ENCODE measurements at regions of chr3 and their contacts with region 1.

Region 1: GRCh38 chr3:17233398-17233800 is 348.6 kb downstream of the PLCL2 start:
- DNase-seq: peak; percentile 5
- H3K4me3 ChIP-seq: no peak overlapping the region
- H3K27ac ChIP-seq: no peak overlapping the region
- H3K4me1 ChIP-seq: no peaks in the 10 kb centered on the region
- H3K27me3 ChIP-seq: no peaks in the 10 kb centered on the region
- CTCF ChIP-seq: peak in 3 of 4 experiments; percentile 35 to 61 (median 51)
- POLR2A ChIP-seq: no peak

Region 2: GRCh38 chr3:16600780-16601539 is 632.4 kb before region 1 on chr3:
- intact Hi-C with region 1: loop called (anchors 5 kb)
- DNase-seq: peak; percentile 79
- H3K4me3 ChIP-seq: no peak overlapping the region
- H3K27ac ChIP-seq: no peak overlapping the region
- H3K4me1 ChIP-seq: no peaks in the 10 kb centered on the region
- H3K27me3 ChIP-seq: no peaks in the 10 kb centered on the region
- CTCF ChIP-seq: peak; percentile 72 to 90 (median 82)
- POLR2A ChIP-seq: no peak

Region 3: DNA sequence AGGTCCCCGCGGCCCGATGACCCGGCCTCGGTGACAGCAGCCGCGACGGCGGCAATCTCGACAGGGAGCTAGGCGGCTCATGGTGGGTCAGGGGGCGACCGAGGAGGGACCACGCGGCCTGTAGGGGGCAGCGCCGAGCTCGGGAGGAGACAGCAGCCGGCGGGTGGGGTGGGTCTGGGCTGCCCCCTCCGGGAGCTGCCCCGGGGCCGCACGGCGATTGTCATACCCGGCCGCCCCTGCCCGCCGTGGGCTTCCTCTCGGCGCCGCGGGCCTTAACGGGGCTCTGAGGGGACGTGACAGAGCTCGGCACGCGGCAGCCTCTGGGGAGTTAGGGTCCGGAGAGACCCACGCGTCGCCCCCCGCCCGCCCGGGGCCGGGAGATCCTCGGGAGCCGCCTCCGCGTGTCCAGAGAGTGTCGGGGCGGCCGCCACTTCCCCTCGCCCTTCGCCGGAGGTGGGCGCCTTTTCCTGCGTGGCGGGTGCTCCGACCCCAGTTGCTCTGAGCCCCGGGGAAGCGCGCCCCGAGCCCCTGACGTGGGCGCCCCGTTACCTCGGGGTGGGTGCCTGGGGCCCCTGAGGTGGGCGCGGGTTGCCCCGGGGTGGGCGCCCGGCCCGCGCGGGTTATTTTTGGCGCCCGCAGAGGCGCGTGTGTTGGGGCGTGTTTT is 349.2 kb before region 1 on chr3:
- intact Hi-C with region 1: loop called (anchors 10 kb)
- DNase-seq: no peak
- H3K4me3 ChIP-seq: peak overlapping the region; percentile 58 to 61
- H3K27ac ChIP-seq: peak overlapping the region; percentile 77 to 84
- H3K4me1 ChIP-seq: no peaks in the 10 kb centered on the region
- H3K27me3 ChIP-seq: no peaks in the 10 kb centered on the region
- CTCF ChIP-seq: peak in 3 of 4 experiments; percentile 29 to 53 (median 36)
- POLR2A ChIP-seq: no peak

Region 4: GRCh38 chr3:17032407-17033034 is 200.9 kb before region 1 on chr3:
- intact Hi-C with region 1: loop called (anchors 10 kb)
- DNase-seq: no peak
- H3K4me3 ChIP-seq: no peak overlapping the region
- H3K27ac ChIP-seq: no peak overlapping the region
- H3K4me1 ChIP-seq: no peaks in the 10 kb centered on the region
- H3K27me3 ChIP-seq: no peaks in the 10 kb centered on the region
- CTCF ChIP-seq: peak in 3 of 4 experiments; percentile 31 to 61 (median 54)
- POLR2A ChIP-seq: no peak

Region 5: DNA sequence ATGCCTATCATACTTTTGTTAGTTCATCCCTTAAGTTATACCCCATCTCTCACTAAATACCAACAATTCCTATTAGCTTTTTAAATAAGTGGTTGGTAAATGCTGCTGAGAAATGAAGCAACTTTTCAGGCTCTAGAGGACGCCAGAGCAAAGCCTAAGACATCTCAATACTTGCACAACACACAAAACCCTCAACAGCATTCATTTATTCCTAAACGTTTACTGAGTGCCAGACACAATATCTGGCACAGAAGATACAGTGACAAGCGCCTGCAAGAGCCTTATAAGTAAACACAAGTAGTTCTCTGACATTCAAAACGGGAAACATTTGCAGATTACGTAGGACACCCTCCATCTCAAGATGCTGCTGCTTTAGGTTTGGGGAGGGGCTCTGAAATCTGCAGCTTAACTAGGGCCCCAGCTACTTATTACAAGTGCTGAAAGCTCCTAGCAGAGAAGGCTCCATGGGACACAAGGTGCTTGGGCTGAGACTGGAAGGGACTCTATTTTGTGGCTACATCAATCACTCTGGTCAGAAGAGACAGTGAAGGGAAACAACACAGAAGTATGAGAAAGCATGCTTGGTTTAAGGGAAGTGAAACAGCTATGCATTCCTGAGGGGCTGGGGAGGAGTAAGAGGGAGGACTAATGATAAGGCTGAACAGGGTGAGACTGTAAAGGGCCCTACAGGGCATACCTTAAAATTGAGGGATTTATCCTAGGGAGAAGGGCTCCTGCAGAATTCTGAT is 37.4 kb before region 1 on chr3:
- intact Hi-C with region 1: no loop called
- DNase-seq: no peak
- H3K4me3 ChIP-seq: no peak overlapping the region
- H3K27ac ChIP-seq: no peak overlapping the region
- H3K4me1 ChIP-seq: no peaks in the 10 kb centered on the region
- H3K27me3 ChIP-seq: no peaks in the 10 kb centered on the region
- CTCF ChIP-seq: no peak
- POLR2A ChIP-seq: no peak

Measured in prostate gland (tissue), 2 donors.